ENCODE measurements at regions of chr5 and their contacts with region 1.

Region 1: GRCh38 chr5:139968547-139969261 is 74.4 kb downstream of the NRG2 start:
- DNase-seq: peak; percentile 43
- ATAC-seq: peak; percentile 97
- H3K4me3 ChIP-seq: no peak overlapping the region
- H3K27ac ChIP-seq: no peak overlapping the region
- H3K4me1 ChIP-seq: peaks cover 10% of the 10 kb centered on the region
- H3K27me3 ChIP-seq: no peaks in the 10 kb centered on the region
- CTCF ChIP-seq: peak; percentile 100; a peak in 5 of 6 replicates
- EP300 ChIP-seq: no peak
- POLR2A ChIP-seq: no peak
- RAD21 ChIP-seq: peak; percentile 97

Region 2: DNA sequence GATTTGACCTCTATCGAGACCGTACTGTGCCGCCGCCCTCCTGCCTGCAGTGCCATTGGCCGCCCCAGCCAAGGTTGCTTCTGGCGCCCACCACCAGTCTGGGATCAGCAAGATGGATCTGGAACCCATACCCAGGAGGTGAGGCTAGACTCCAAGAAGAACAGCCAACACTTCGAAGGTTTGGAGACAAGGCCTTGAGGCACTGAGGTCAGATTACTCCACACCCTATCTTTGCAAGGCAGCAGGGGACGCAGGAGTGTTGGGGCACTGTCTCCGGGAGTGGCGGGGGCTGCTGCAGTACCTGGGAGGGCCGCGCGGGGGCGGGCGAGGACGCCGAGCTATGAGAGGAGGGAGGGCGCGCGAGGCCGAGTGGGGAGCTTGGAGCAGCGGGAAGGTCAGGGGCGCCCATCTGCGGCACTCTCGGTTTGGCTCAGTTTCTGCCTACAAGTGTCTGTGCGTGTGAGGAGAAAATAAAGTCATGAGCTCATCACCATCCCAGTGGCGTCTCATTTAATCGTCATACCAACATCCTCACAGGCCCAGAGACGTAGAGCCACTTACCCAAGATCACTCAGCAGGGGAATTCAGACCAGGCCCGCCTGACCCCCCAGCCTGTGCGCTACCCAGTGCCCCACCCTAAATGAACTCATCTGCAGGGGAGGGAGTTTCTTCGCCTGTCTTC is 193.6 kb before region 1 on chr5:
- CTCF ChIA-PET with region 1: interaction called, 77 read pairs
- POLR2A ChIA-PET with region 1: no interaction called
- RAD21 ChIA-PET with region 1: interaction called, 4 read pairs
- SMC1A ChIA-PET with region 1: interaction called, 35 read pairs
- in situ Hi-C with region 1: no loop called
- intact Hi-C with region 1: no loop called
- DNase-seq: no peak
- ATAC-seq: peak; percentile 98
- H3K4me3 ChIP-seq: no peak overlapping the region
- H3K27ac ChIP-seq: no peak overlapping the region
- H3K4me1 ChIP-seq: peaks cover 7% of the 10 kb centered on the region; the same call in 1 of the 2 replicates
- H3K27me3 ChIP-seq: peaks cover 0 to 3% of the 10 kb centered on the region in 2 experiments; a peak in 1 of 4 replicates
- CTCF ChIP-seq: peak; percentile 78 to 98 (median 90)
- EP300 ChIP-seq: no peak
- POLR2A ChIP-seq: no peak
- RAD21 ChIP-seq: peak; percentile 47

Region 3: DNA sequence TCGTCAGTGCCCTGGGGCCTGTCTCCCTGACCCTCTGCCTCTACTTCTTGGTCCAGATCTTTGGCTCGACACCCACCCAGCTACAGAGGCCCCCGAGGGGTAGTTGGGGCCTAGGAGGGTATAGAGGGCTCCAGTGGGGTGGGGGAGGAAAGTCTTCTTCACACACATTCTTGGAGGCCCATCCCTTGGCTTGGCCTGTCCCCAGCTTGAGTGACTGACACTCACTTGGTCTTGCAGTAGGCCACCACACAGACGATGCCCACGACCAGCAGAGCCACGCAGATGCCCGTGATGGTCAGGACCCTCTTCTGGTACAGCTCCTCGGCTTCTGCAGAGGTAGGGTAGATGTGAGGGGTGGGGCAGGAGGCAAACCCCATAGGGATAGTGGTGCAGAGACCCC is 113.3 kb before region 1 on chr5:
- CTCF ChIA-PET with region 1: interaction called, 129 read pairs
- POLR2A ChIA-PET with region 1: no interaction called
- RAD21 ChIA-PET with region 1: interaction called, 7 read pairs
- SMC1A ChIA-PET with region 1: interaction called, 14 read pairs
- in situ Hi-C with region 1: no loop called
- intact Hi-C with region 1: no loop called
- DNase-seq: no peak
- ATAC-seq: no peak
- H3K4me3 ChIP-seq: no peak overlapping the region
- H3K27ac ChIP-seq: no peak overlapping the region
- H3K4me1 ChIP-seq: no peaks in the 10 kb centered on the region
- H3K27me3 ChIP-seq: no peaks in the 10 kb centered on the region
- CTCF ChIP-seq: no peak
- EP300 ChIP-seq: no peak
- POLR2A ChIP-seq: no peak
- RAD21 ChIP-seq: no peak

Region 4: DNA sequence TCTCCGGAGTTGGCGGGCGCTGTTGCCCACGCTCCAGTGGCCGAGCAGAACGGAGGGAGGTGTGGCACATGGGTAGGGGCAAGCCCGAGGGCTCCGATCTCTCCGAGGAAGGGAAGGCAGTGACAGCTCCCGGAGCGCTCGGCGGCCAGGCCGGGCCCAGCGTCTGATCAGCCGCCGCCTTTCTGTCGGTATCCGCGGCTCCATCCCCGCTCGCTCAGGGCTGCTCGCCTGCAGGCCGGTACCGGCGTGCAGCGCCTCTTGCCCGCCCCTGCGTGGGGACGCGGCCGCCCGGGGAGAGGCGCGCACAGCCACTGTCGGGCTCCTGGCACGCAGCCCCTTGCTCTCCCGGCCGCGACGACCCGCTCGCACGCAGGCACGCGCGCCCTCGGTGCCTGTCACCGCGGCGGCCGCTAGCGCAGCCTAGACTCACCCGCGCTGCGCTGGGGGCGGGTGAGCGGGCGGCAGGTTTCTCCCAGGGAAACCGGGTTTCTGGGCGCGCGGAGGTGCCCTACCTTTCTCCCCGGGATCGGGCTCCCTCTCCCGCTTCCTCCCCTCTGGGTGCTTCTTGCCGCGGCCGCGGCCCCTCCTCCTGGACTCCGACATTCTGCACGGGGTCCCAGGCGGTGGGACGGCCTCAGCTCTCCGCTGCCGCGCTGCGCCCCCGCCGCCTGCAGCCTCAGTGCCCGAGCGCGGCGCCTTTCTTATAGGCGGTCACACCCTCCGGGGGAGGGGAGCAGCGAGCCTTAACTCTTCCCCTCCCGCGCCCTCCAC is 64.7 kb before region 1 on chr5:
- CTCF ChIA-PET with region 1: interaction called, 29 read pairs
- POLR2A ChIA-PET with region 1: no interaction called
- RAD21 ChIA-PET with region 1: interaction called, 9 read pairs
- SMC1A ChIA-PET with region 1: interaction called, 4 read pairs
- in situ Hi-C with region 1: no loop called
- intact Hi-C with region 1: loop called (anchors 5 kb)
- DNase-seq: no peak
- ATAC-seq: peak; percentile 80
- H3K4me3 ChIP-seq: peak overlapping the region; percentile 46; the same call in 1 of the 2 replicates
- H3K27ac ChIP-seq: no peak overlapping the region
- H3K4me1 ChIP-seq: no peaks in the 10 kb centered on the region; the same call in 1 of the 2 replicates
- H3K27me3 ChIP-seq: peaks cover 0 to 13% of the 10 kb centered on the region in 2 experiments; a peak in 2 of 4 replicates
- CTCF ChIP-seq: no peak
- EP300 ChIP-seq: no peak
- POLR2A ChIP-seq: no peak
- RAD21 ChIP-seq: no peak

Region 5: DNA sequence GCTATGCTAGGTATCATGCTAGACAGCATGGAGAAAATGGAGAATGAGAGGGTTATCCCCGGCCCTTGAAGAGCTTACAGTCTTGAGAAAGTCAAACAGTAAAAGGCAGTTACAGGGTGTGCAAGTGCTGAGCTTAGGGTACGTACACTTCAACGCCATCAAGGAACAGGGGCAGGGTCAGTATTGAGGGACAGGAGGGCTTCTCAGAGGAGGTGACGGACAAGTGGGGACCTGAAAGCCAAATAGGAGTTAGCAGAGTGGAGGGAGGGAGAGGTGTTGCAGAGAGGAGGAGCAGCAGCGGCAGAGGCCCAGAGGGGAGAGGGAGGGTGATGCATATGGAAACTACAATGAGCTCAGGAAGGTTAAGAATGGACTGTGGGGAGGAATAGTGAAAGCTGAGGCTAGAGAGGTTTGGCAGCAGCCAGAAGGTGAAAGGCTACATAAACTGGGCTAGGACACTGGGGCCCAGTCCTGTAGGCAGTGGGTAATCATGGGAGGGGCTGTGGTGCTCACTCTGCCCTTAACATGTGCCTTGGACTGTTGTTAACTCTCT is 13.6 kb before region 1 on chr5:
- CTCF ChIA-PET with region 1: interaction called, 74 read pairs
- POLR2A ChIA-PET with region 1: interaction called, 3 read pairs
- RAD21 ChIA-PET with region 1: interaction called, 10 read pairs
- SMC1A ChIA-PET with region 1: interaction called, 25 read pairs
- in situ Hi-C with region 1: no loop called
- intact Hi-C with region 1: no loop called
- DNase-seq: no peak
- ATAC-seq: peak; percentile 84
- H3K4me3 ChIP-seq: no peak overlapping the region
- H3K27ac ChIP-seq: no peak overlapping the region
- H3K4me1 ChIP-seq: peaks cover 45% of the 10 kb centered on the region
- H3K27me3 ChIP-seq: no peaks in the 10 kb centered on the region
- CTCF ChIP-seq: no peak
- EP300 ChIP-seq: no peak
- POLR2A ChIP-seq: no peak
- RAD21 ChIP-seq: no peak

Region 6: GRCh38 chr5:140035881-140036280 is 67.2 kb after region 1 on chr5:
- CTCF ChIA-PET with region 1: interaction called, 123 read pairs
- POLR2A ChIA-PET with region 1: no interaction called
- RAD21 ChIA-PET with region 1: interaction called, 26 read pairs
- SMC1A ChIA-PET with region 1: interaction called, 36 read pairs
- in situ Hi-C with region 1: no loop called
- intact Hi-C with region 1: no loop called
- DNase-seq: no peak
- ATAC-seq: peak; percentile 19
- H3K4me3 ChIP-seq: peak overlapping the region; percentile 31; the same call in 1 of the 2 replicates
- H3K27ac ChIP-seq: peak overlapping the region; percentile 7; the same call in 1 of the 2 replicates
- H3K4me1 ChIP-seq: no peaks in the 10 kb centered on the region; the same call in 1 of the 2 replicates
- H3K27me3 ChIP-seq: no peaks in the 10 kb centered on the region
- CTCF ChIP-seq: no peak
- EP300 ChIP-seq: no peak
- POLR2A ChIP-seq: no peak
- RAD21 ChIP-seq: no peak

Region 7: DNA sequence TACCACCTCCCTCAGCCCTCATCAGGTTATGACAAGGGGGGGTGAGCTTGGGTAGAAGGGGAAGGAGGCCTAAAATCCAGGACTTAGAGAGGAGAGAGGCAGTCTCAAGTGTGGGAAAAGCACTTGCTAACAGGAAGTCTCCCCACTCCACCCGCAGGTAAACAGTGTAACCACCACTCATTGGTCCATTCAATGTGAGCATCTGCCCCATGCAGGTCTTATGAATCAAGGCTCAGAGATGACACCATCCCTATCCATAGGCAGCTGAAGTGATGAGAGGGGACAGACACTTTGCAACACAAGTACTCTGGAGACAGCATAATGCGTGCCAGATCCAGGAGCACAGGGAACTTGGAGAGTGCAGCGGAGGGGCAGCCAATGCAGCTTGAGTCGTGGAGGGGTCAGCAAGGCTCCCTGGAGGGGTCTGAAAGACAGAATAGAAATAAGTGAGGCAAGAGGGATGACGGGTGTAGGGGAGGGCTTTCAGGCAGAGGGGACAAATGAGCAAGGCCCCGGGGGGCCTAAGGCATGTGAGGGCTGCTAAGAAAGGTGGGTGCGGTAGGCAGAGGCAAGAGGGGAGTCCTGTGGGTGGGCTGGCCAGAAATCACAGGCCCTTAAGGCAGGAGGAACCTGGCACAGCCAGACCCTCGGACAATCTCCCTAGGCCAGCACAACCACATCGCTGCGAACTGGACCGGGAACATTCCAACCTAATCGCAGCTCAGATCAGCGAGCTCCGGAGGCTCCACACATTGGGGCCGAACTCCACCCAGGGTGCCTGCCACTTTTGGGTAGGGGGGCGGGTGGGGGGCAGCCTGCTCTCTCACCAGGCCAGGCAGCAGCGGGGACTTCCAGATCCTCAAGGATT is 183.3 kb after region 1 on chr5:
- CTCF ChIA-PET with region 1: interaction called, 10 read pairs
- POLR2A ChIA-PET with region 1: no interaction called
- RAD21 ChIA-PET with region 1: interaction called, 10 read pairs
- SMC1A ChIA-PET with region 1: interaction called, 5 read pairs
- in situ Hi-C with region 1: no loop called
- intact Hi-C with region 1: loop called (anchors 2 kb)
- DNase-seq: no peak
- ATAC-seq: no peak
- H3K4me3 ChIP-seq: no peak overlapping the region
- H3K27ac ChIP-seq: no peak overlapping the region
- H3K4me1 ChIP-seq: peaks cover 4% of the 10 kb centered on the region
- H3K27me3 ChIP-seq: no peaks in the 10 kb centered on the region
- CTCF ChIP-seq: no peak
- EP300 ChIP-seq: no peak
- POLR2A ChIP-seq: no peak
- RAD21 ChIP-seq: no peak

Region 8: DNA sequence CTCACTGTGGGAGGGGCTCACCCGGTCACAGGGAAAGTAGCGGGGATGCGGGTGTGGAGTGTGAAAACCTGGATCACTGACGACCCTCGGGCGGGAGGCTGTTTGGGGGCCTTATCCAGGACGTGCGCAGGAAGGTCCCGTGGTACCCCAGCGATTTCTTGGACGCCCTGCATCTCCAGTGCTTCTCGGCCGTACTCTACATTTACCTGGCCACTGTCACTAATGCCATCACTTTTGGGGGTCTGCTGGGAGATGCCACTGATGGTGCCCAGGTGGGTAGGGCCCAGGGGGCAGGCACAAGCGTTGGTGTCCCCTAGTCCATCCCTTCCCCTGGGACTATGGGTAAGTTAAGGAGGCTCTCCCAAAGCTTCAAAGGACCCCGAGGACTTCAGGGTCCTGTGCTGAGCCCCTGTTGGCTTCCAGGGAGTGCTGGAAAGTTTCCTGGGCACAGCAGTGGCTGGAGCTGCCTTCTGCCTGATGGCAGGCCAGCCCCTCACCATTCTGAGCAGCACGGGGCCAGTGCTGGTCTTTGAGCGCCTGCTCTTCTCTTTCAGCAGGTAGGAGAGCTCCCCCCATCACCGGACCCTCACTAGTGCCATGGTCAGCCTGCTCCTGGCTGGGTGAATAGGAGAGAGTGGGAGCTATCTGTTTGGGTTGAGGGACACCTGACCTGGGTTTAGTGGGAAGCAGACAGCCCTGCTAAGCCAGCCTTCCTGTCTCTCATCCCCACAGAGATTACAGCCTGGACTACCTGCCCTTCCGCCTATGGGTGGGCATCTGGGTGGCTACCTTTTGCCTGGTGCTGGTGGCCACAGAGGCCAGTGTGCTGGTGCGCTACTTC is 395.1 kb after region 1 on chr5:
- CTCF ChIA-PET with region 1: no interaction called
- POLR2A ChIA-PET with region 1: no interaction called
- RAD21 ChIA-PET with region 1: no interaction called
- SMC1A ChIA-PET with region 1: no interaction called
- in situ Hi-C with region 1: no loop called
- intact Hi-C with region 1: no loop called
- DNase-seq: no peak
- ATAC-seq: no peak
- H3K4me3 ChIP-seq: 0 out of 2 replicates have a peak overlapping the region, but pooled peaks have one; percentile 57
- H3K27ac ChIP-seq: no peak overlapping the region
- H3K4me1 ChIP-seq: no peaks in the 10 kb centered on the region; the same call in 1 of the 2 replicates
- H3K27me3 ChIP-seq: no peaks in the 10 kb centered on the region
- CTCF ChIP-seq: no peak
- EP300 ChIP-seq: no peak
- POLR2A ChIP-seq: no peak
- RAD21 ChIP-seq: no peak

Region 9: GRCh38 chr5:140700177-140701144 is 731.8 kb after region 1 on chr5 and contains the start of gene ZMAT2:
- CTCF ChIA-PET with region 1: no interaction called
- POLR2A ChIA-PET with region 1: no interaction called
- RAD21 ChIA-PET with region 1: no interaction called
- SMC1A ChIA-PET with region 1: no interaction called
- in situ Hi-C with region 1: no loop called
- intact Hi-C with region 1: no loop called
- DNase-seq: peak; percentile 96
- ATAC-seq: peak; percentile 100
- H3K4me3 ChIP-seq: peak within 1 kb of the TSS; percentile 92
- H3K27ac ChIP-seq: peak within 1 kb of the TSS; percentile 38; the same call in 1 of the 2 replicates
- H3K4me1 ChIP-seq: peaks cover 7% of the 10 kb centered on the region; the same call in 1 of the 2 replicates
- H3K27me3 ChIP-seq: no peaks in the 10 kb centered on the region
- CTCF ChIP-seq: no peak
- EP300 ChIP-seq: no peak
- POLR2A ChIP-seq: peak; percentile 88
- RAD21 ChIP-seq: no peak
- polyA plus RNA-seq, gene ZMAT2: 41.5 to 41.8 TPM

Measured in GM12878 (cell line).